ENCODE measurements at regions of chr15 and their contacts with region 1.

Region 1: DNA sequence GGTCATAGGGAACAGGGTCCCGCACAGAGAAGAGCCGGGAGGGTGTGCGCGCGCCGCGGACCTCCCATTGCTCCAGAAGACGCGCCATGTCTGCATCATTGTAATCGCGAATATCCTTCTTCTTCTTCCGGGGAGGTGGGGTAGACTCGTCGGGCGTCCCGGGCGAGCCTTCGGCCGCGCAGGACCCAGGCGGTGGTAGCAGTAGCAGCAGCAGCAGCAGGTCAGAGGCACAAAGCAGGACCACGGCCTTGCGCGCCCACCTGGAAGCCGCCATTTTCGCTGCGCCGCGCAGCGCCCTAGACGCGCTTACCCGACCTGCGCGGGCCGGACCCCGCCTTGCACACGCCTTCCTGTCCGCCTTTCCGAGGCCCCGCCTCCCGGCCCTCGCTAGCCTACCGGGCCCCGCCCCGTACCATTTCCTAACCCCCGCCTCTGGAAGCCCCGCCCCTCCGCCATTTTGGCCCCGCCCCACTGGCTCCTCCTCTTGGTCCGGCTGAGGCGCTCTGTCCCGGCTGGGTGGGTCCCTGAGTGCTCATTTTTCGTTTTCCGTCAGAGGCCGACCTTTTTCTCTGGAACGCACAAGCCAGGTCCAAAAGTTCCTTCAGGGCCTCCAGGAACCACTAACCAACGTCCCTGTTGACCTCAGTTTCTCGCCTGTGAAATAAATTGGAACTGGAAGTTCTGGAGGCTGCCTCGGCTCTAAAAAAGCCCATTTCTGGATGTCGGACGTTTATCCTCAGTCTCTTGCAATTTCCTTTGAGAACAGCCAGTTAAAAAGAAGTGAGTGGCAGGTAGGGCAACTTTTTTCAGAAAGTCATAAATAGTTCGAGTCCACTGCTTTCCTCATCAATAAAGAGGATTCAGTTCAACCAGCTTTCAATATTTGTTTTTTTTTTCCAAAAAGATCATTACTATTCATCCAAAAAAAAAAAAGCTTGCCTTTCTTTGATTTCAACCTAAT is at the start of gene MESD:
- DNase-seq: peak; percentile 97
- H3K4me3 ChIP-seq: peak within 1 kb of the TSS; percentile 86
- H3K27ac ChIP-seq: peak within 1 kb of the TSS; percentile 47
- H3K4me1 ChIP-seq: peaks cover 38% of the 10 kb centered on the region
- CTCF ChIP-seq: no peak
- total RNA-seq, gene MESD: 14.9 and 17.3 TPM in 2 replicates

Region 2: DNA sequence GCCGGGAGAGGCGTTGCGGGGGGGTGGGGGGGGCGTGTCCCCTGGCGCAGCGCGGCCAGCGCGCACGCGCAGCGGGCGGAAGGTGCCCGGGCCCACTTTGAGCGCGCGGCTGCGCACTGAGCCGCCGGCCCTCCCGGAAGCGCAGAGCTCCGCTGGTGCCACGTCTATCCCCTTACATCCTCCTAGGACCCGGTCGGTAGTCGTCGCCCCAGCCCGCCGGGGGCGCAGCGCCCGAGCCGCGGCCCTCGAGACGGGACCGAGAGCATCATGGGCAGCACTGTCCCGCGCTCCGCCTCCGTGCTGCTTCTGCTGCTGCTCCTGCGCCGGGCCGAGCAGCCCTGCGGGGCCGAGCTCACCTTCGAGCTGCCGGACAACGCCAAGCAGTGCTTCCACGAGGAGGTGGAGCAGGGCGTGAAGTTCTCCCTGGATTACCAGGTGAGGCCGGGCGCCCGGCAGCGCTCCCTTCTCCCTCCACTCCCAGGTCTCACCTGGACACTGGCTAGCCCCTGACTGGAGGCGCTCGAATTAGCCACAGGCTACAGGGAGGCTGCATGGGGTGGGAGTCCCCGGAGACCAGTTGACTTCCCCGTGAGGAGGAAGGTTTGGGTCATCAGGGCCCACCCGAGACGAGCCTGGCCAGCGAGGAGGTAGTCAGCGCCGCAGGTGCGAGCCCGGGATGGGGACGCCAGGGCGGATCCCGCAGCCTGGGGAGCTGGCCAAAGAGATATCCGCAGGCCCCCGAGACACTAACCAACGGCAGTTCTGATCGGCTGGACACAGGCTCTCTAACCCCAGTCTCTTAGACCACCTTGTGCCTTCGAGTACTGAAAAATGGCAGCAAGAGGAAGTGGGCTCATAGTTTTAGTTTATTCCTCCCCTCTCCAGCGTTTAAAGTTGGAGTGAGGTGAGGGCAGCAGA is 1678.6 kb before region 1 on chr15 and contains the start of gene TMED3:
- CTCF ChIA-PET with region 1: no interaction called
- POLR2A ChIA-PET with region 1: no interaction called
- intact Hi-C with region 1: loop called (anchors 5 kb)
- DNase-seq: peak; percentile 92
- H3K4me3 ChIP-seq: peak within 1 kb of the TSS; percentile 83
- H3K27ac ChIP-seq: peak within 1 kb of the TSS; percentile 12
- H3K4me1 ChIP-seq: peaks cover 17% of the 10 kb centered on the region
- CTCF ChIP-seq: peak; percentile 63
- total RNA-seq, gene TMED3: 51.5 and 55.9 TPM in 2 replicates

Region 3: GRCh38 chr15:80977627-80978036 is 12.2 kb before region 1 on chr15:
- CTCF ChIA-PET with region 1: no interaction called
- POLR2A ChIA-PET with region 1: interaction called, 10 read pairs
- intact Hi-C with region 1: loop called (anchors 1 kb)
- DNase-seq: peak; percentile 72
- H3K4me3 ChIP-seq: no peak overlapping the region
- H3K27ac ChIP-seq: no peak overlapping the region
- H3K4me1 ChIP-seq: peaks cover 29% of the 10 kb centered on the region
- CTCF ChIP-seq: peak; percentile 89

Region 4: GRCh38 chr15:81000624-81001151 is 10.9 kb after region 1 on chr15 and contains the start of gene TLNRD1:
- CTCF ChIA-PET with region 1: no interaction called
- POLR2A ChIA-PET with region 1: interaction called, 24 read pairs
- intact Hi-C with region 1: no loop called
- DNase-seq: peak; percentile 86
- H3K4me3 ChIP-seq: peak within 1 kb of the TSS; percentile 77
- H3K27ac ChIP-seq: peak within 1 kb of the TSS; percentile 65
- H3K4me1 ChIP-seq: peaks cover 31% of the 10 kb centered on the region
- CTCF ChIP-seq: no peak
- total RNA-seq, gene TLNRD1: 17.0 and 19.9 TPM in 2 replicates

Measured in OCI-LY7 (cell line).